ENCODE measurements at regions of chr3 and their contacts with region 1.

Region 1: GRCh38 chr3:149330609-149331331 is 2.7 kb downstream of the TM4SF18 start:
- DNase-seq: no peak
- H3K4me3 ChIP-seq: peak overlapping the region in 1 of 3 experiments; percentile 92
- H3K27ac ChIP-seq: peak overlapping the region; percentile 92
- H3K4me1 ChIP-seq: peaks cover 54% of the 10 kb centered on the region
- H3K27me3 ChIP-seq: no peaks in the 10 kb centered on the region
- CTCF ChIP-seq: no peak
- POLR2A ChIP-seq: no peak

Region 2: GRCh38 chr3:149299938-149300791 is 30.6 kb before region 1 on chr3:
- CTCF ChIA-PET with region 1: interaction called, 11 read pairs
- POLR2A ChIA-PET with region 1: no interaction called
- dilution Hi-C with region 1: no loop called
- intact Hi-C with region 1: no loop called
- DNase-seq: peak; percentile 90
- H3K4me3 ChIP-seq: no peak overlapping the region
- H3K27ac ChIP-seq: peak overlapping the region; percentile 45
- H3K4me1 ChIP-seq: peaks cover 11% of the 10 kb centered on the region
- H3K27me3 ChIP-seq: no peaks in the 10 kb centered on the region
- CTCF ChIP-seq: no peak
- POLR2A ChIP-seq: no peak

Region 3: GRCh38 chr3:149366941-149367840 is 36.4 kb after region 1 on chr3:
- CTCF ChIA-PET with region 1: interaction called, 11 read pairs
- POLR2A ChIA-PET with region 1: interaction called, 18 read pairs
- dilution Hi-C with region 1: no loop called
- intact Hi-C with region 1: loop called (anchors 1 kb)
- DNase-seq: peak; percentile 90
- H3K4me3 ChIP-seq: no peak overlapping the region
- H3K27ac ChIP-seq: peak overlapping the region; percentile 39
- H3K4me1 ChIP-seq: peaks cover 52% of the 10 kb centered on the region
- H3K27me3 ChIP-seq: no peaks in the 10 kb centered on the region
- CTCF ChIP-seq: no peak
- POLR2A ChIP-seq: peak; percentile 61

Region 4: DNA sequence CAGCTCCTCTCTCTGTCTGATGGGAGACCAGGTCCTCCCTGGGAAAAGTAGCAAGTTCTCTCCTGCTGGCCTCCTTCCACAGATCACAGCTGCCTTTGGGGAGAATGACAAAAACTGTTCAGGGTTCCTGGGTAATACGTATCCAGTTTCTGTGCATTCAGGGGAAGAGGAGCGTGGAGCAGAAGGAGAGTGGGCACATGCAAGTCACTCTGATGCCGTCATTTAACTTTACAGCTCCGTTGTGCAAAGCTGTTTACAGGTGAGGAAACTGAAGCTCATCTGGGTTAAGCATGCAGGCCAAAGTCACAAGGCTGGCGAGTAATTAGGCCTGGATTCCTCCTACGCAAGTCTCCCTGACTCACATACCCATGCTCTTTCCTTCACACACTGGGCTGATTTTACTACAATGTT is 54.1 kb after region 1 on chr3:
- CTCF ChIA-PET with region 1: no interaction called
- POLR2A ChIA-PET with region 1: no interaction called
- dilution Hi-C with region 1: no loop called
- intact Hi-C with region 1: no loop called
- DNase-seq: no peak
- H3K4me3 ChIP-seq: no peak overlapping the region
- H3K27ac ChIP-seq: no peak overlapping the region
- H3K4me1 ChIP-seq: peaks cover 25% of the 10 kb centered on the region
- H3K27me3 ChIP-seq: no peaks in the 10 kb centered on the region
- CTCF ChIP-seq: no peak
- POLR2A ChIP-seq: no peak

Region 5: DNA sequence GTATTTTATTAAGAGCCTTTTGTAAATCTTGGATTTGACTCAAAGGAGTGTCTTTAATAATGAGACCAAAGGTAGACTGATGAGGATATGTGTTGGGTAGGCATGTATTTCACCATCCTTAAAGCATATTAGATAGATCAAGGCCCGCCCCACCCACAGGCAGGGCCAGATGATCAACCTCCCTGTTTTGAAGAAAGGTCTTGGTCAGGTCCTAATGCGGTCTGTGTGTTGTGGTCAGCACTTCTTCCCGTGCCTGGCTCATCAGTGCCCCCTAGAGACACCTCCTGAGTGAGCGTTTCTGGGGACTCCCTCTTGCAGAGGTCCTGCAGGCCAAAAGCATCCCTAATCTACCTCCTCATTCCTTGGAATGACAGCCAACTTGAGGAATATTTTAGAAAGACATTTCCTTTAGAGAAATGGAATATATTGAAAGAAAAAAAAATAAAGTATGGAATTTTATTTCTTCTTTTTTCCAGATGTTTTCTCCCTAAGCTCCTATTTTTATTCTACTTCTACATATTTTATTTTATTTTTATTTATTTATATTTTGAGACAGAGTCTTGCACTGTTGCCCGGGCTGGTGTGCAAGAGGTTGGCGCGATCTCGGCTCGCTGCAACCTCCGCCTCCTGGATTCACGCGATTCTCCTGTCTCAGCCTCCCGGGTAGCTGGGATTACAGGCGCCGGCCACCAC is 149.7 kb after region 1 on chr3:
- CTCF ChIA-PET with region 1: interaction called, 6 read pairs
- POLR2A ChIA-PET with region 1: no interaction called
- dilution Hi-C with region 1: no loop called
- intact Hi-C with region 1: loop called (anchors 1 kb)
- DNase-seq: peak; percentile 93
- H3K4me3 ChIP-seq: no peak overlapping the region
- H3K27ac ChIP-seq: peak overlapping the region; percentile 64
- H3K4me1 ChIP-seq: peaks cover 12% of the 10 kb centered on the region
- H3K27me3 ChIP-seq: no peaks in the 10 kb centered on the region
- CTCF ChIP-seq: peak; percentile 91 to 93
- POLR2A ChIP-seq: no peak

Region 6: DNA sequence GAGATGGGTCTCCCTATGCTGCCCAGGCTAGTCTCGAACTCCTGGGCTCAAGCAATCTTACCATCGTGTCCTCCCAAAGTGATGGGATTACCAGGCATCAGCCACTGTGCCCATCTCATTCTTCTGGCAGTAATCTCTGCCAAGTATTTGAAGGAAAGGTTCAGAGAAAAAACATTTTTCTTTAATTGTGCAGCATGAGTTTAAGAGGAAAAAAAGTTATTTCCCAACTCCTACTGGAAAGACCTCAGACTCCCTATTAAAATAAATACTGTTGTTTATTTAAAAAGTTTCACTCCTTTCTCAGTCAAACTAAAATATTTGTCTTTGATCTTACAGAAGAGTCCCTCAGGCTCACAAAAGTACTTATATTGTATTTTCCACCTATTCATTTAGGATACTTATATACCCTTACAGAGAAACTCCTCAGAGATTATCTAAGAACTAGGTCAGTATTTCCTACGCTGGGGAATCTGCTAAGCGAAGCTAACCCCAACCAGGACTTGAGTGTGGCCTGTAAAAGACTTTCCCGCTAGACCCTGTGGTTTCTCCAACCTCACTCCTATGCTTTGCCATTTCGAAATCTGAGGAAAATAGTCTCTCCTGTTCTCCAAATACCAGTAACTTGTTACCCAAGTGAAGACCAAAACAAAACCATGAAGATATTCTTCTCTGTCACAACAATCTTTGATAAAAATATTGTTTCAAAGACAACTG is 298.3 kb after region 1 on chr3:
- CTCF ChIA-PET with region 1: no interaction called
- POLR2A ChIA-PET with region 1: no interaction called
- dilution Hi-C with region 1: no loop called
- intact Hi-C with region 1: no loop called
- DNase-seq: no peak
- H3K4me3 ChIP-seq: no peak overlapping the region
- H3K27ac ChIP-seq: no peak overlapping the region
- H3K4me1 ChIP-seq: peaks cover 63% of the 10 kb centered on the region
- H3K27me3 ChIP-seq: no peaks in the 10 kb centered on the region
- CTCF ChIP-seq: no peak
- POLR2A ChIP-seq: no peak

Measured in endothelial cell of umbilical vein (primary cell).